Adrenal gland (tissue), 19 donors: ENCODE measurements at regions of chr7 and their contacts with region 1.

Region 1: GRCh38 chr7:71733107-71733870 is 601.3 kb downstream of the GALNT17 start:
- DNase-seq: peak; percentile 75 to 91 (median 87)
- H3K4me3 ChIP-seq: no peak overlapping the region
- H3K27ac ChIP-seq: no peak overlapping the region
- H3K4me1 ChIP-seq: peaks cover 0 to 5% of the 10 kb centered on the region in 2 donors
- H3K27me3 ChIP-seq: peaks cover 4% of the 10 kb centered on the region
- CTCF ChIP-seq: peak; percentile 76 to 92 (median 91)
- POLR2A ChIP-seq: no peak

Region 2: DNA sequence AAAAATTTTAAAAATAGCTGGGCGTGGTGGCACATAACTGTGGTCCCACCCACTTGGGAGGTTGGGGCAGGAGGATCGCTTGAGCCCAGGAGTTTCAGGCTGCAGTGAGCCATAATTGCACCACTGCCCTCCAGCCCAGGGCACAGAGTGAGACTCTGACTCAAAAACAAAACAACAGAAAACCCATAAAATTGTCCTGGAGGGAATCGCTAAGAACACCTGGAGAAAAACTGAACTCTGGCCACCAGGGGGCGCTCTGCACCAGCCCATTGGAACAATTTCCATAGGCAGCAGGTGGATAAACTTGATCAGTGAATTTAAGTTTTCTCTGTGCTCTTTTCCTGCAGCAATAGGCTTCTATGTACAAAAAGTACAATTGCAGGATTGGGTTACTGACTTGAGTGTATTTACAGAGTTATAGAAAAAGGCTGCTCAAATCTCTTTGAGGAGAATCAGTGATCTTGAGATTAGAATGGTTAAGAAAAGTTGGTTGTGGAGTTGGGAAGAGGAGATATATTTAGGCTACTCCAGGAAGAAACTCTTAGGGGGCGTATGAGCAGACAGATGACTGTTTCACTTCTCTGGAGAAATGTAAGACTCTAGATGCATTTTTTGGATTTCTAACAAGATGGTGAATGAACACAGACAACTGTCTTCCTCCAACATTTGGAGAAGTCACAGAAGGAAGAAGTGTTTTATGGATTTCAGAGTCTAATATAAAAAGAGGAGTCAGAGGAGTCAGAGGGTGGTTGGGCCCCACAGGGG is 876.2 kb before region 1 on chr7:
- intact Hi-C with region 1: loop called (anchors 5 kb)
- DNase-seq: peak; percentile 63 to 90 (median 75)
- H3K4me3 ChIP-seq: no peak overlapping the region
- H3K27ac ChIP-seq: no peak overlapping the region
- H3K4me1 ChIP-seq: no peaks in the 10 kb centered on the region
- H3K27me3 ChIP-seq: no peaks in the 10 kb centered on the region
- CTCF ChIP-seq: peak; percentile 76 to 99 (median 86)
- POLR2A ChIP-seq: no peak

Region 3: GRCh38 chr7:71131256-71132126 is 601.8 kb before region 1 on chr7:
- intact Hi-C with region 1: loop called in 1 of 2 experiments (anchors 5 kb)
- DNase-seq: peak; percentile 23 to 59 (median 38)
- H3K4me3 ChIP-seq: peak overlapping the region in 2 of 4 donors; percentile 28 to 55
- H3K27ac ChIP-seq: peak overlapping the region in 2 of 5 donors; percentile 44 to 66
- H3K4me1 ChIP-seq: no peaks in the 10 kb centered on the region
- H3K27me3 ChIP-seq: peaks cover 18% of the 10 kb centered on the region
- CTCF ChIP-seq: peak in 3 of 6 experiments; percentile 13 to 33 (median 25)
- POLR2A ChIP-seq: peak in 1 of 2 donors; percentile 12

Region 4: GRCh38 chr7:71835056-71835455 is 101.8 kb after region 1 on chr7:
- intact Hi-C with region 1: no loop called
- DNase-seq: no peak
- H3K4me3 ChIP-seq: no peak overlapping the region
- H3K27ac ChIP-seq: no peak overlapping the region
- H3K4me1 ChIP-seq: no peaks in the 10 kb centered on the region
- H3K27me3 ChIP-seq: no peaks in the 10 kb centered on the region
- CTCF ChIP-seq: no peak
- POLR2A ChIP-seq: no peak